Mammary epithelial cell (primary cell): ENCODE measurements at regions of chr2 and their contacts with region 1.

Region 1: GRCh38 chr2:119174216-119175037 is 15.9 kb upstream of the C1QL2 start:
- DNase-seq: peak; percentile 13
- H3K4me3 ChIP-seq: no peak overlapping the region
- H3K27ac ChIP-seq: no peak overlapping the region
- H3K4me1 ChIP-seq: peaks cover 11% of the 10 kb centered on the region
- H3K27me3 ChIP-seq: no peaks in the 10 kb centered on the region
- CTCF ChIP-seq: peak; percentile 82 to 84

Region 2: GRCh38 chr2:119106301-119106897 is 68.0 kb before region 1 on chr2:
- CTCF ChIA-PET with region 1: no interaction called
- dilution Hi-C with region 1: loop called (anchors 5 kb)
- in situ Hi-C with region 1: no loop called
- intact Hi-C with region 1: loop called (anchors 5 kb)
- DNase-seq: peak; percentile 27
- H3K4me3 ChIP-seq: no peak overlapping the region
- H3K27ac ChIP-seq: no peak overlapping the region
- H3K4me1 ChIP-seq: peaks cover 6% of the 10 kb centered on the region
- H3K27me3 ChIP-seq: no peaks in the 10 kb centered on the region
- CTCF ChIP-seq: no peak

Region 3: GRCh38 chr2:119208791-119209203 is 34.4 kb after region 1 on chr2:
- CTCF ChIA-PET with region 1: interaction called, 13 read pairs
- dilution Hi-C with region 1: no loop called
- in situ Hi-C with region 1: no loop called
- intact Hi-C with region 1: no loop called
- DNase-seq: peak; percentile 96
- H3K4me3 ChIP-seq: no peak overlapping the region
- H3K27ac ChIP-seq: no peak overlapping the region
- H3K4me1 ChIP-seq: peaks cover 37% of the 10 kb centered on the region
- H3K27me3 ChIP-seq: no peaks in the 10 kb centered on the region
- CTCF ChIP-seq: peak; percentile 49

Region 4: GRCh38 chr2:119223521-119224390 is 49.3 kb after region 1 on chr2 and contains the start of gene STEAP3:
- CTCF ChIA-PET with region 1: no interaction called
- dilution Hi-C with region 1: no loop called
- in situ Hi-C with region 1: no loop called
- intact Hi-C with region 1: no loop called
- DNase-seq: peak; percentile 57
- H3K4me3 ChIP-seq: peak within 1 kb of the TSS; percentile 80 to 84 (median 82)
- H3K27ac ChIP-seq: peak within 1 kb of the TSS; percentile 24
- H3K4me1 ChIP-seq: peaks cover 20% of the 10 kb centered on the region
- H3K27me3 ChIP-seq: no peaks in the 10 kb centered on the region
- CTCF ChIP-seq: peak in 1 of 2 donors; percentile 9
- total RNA-seq, gene STEAP3: 28.8 to 35.2 TPM

Region 5: GRCh38 chr2:119252847-119253702 is 78.6 kb after region 1 on chr2:
- CTCF ChIA-PET with region 1: no interaction called
- dilution Hi-C with region 1: no loop called
- in situ Hi-C with region 1: no loop called
- intact Hi-C with region 1: loop called (anchors 2 kb)
- DNase-seq: peak; percentile 98
- H3K4me3 ChIP-seq: no peak overlapping the region
- H3K27ac ChIP-seq: peak overlapping the region; percentile 81
- H3K4me1 ChIP-seq: peaks cover 64% of the 10 kb centered on the region
- H3K27me3 ChIP-seq: no peaks in the 10 kb centered on the region
- CTCF ChIP-seq: no peak